A673 (cell line): ENCODE measurements at regions of chr17 and their contacts with region 1.

Region 1: DNA sequence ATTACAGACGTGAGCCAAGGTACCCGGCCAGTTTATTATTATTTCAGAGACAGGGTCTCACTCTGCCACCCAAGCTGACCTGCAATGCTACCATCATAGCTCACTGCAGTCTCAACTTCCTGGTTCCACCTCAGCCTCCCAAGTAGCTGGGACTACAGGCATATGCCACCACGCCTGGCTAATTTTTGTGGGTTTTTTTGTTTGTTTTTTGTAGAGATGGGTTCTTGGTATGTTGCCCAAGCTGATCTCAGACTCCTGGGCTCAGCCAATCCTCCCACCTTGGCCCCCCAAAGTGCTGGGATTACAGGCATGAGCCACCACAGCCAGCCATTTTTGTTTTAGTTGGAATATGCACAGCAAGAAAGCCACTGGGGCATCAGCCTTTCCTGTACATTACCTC is 115.7 kb downstream of the MRM1 start:
- DNase-seq: no peak
- H3K4me3 ChIP-seq: no peak overlapping the region
- H3K27ac ChIP-seq: no peak overlapping the region
- H3K4me1 ChIP-seq: no peaks in the 10 kb centered on the region
- H3K27me3 ChIP-seq: no peaks in the 10 kb centered on the region
- CTCF ChIP-seq: no peak

Region 2: GRCh38 chr17:36777118-36777517 is 60.0 kb after region 1 on chr17:
- CTCF ChIA-PET with region 1: no interaction called
- POLR2A ChIA-PET with region 1: no interaction called
- intact Hi-C with region 1: loop called (anchors 10 kb)
- DNase-seq: no peak
- H3K4me3 ChIP-seq: no peak overlapping the region
- H3K27ac ChIP-seq: no peak overlapping the region
- H3K4me1 ChIP-seq: no peaks in the 10 kb centered on the region
- H3K27me3 ChIP-seq: peaks cover 18% of the 10 kb centered on the region
- CTCF ChIP-seq: no peak